ENCODE measurements at regions of chr1 and their contacts with region 1.

Region 1: DNA sequence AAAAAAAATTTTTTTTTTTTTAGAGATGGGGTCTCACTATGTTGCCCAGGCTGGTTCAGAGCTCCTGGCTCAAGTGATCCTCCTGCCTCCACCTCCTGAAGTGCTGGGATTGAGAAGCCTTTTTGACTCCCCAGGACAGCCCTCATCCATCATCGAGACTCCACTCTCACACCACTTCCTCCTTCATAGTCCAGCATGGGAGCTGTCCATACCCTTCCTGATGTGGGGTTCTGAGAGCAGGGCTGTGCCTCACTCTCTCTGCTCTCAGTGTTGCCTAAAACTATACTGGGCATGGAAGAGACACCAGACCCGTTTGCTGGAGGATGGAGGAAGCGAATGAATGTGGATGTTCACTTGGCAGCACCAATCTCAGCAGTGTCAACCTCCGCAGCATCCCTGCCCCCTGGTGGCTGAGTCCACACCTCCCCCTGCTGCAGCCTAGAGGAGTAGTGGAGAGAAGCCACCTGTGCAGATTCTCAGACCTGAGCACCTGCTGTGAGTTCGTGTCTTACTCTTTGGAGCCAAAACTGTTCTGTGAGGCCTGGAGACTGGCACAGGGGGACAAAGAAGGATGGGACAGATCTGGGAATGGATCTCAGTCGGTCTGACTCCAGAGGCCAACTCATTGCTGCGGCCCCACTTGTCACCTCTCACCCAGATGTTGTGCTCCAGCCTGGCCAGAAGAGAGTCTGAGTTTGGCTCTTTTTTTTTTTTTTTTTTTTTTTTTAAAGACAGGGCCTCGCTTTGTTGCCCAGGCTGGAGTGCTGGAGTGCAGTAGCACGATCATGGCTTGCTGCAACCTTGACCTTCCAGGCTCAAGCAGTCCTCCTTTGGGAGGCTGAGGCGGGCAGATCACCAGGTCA is 17.7 kb downstream of the TINAGL1 start:
- DNase-seq: peak; percentile 90
- ATAC-seq: peak; percentile 91
- H3K4me3 ChIP-seq: no peak overlapping the region
- H3K27ac ChIP-seq: no peak overlapping the region
- H3K4me1 ChIP-seq: peaks cover 17% of the 10 kb centered on the region
- H3K27me3 ChIP-seq: no peaks in the 10 kb centered on the region
- CTCF ChIP-seq: peak; percentile 95

Region 2: GRCh38 chr1:31264790-31265386 is 329.1 kb before region 1 on chr1:
- CTCF ChIA-PET with region 1: interaction called, 12 read pairs
- POLR2A ChIA-PET with region 1: no interaction called
- intact Hi-C with region 1: no loop called
- DNase-seq: no peak
- ATAC-seq: no peak
- H3K4me3 ChIP-seq: no peak overlapping the region
- H3K27ac ChIP-seq: no peak overlapping the region
- H3K4me1 ChIP-seq: peaks cover 13% of the 10 kb centered on the region; the same call in 1 of the 2 replicates
- H3K27me3 ChIP-seq: no peaks in the 10 kb centered on the region
- CTCF ChIP-seq: no peak

Region 3: GRCh38 chr1:31548907-31549808 is 44.8 kb before region 1 on chr1:
- CTCF ChIA-PET with region 1: interaction called, 3 read pairs
- POLR2A ChIA-PET with region 1: no interaction called
- intact Hi-C with region 1: loop called (anchors 1 kb)
- DNase-seq: peak; percentile 97
- ATAC-seq: peak; percentile 86
- H3K4me3 ChIP-seq: peak overlapping the region; percentile 55
- H3K27ac ChIP-seq: peak overlapping the region; percentile 74
- H3K4me1 ChIP-seq: peaks cover 24% of the 10 kb centered on the region
- H3K27me3 ChIP-seq: no peaks in the 10 kb centered on the region
- CTCF ChIP-seq: peak; percentile 96

Region 4: GRCh38 chr1:31564134-31564989 is 29.6 kb before region 1 on chr1:
- CTCF ChIA-PET with region 1: interaction called, 3 read pairs
- POLR2A ChIA-PET with region 1: no interaction called
- intact Hi-C with region 1: loop called (anchors 1 kb)
- DNase-seq: peak; percentile 88
- ATAC-seq: peak; percentile 60
- H3K4me3 ChIP-seq: no peak overlapping the region
- H3K27ac ChIP-seq: peak overlapping the region; percentile 79
- H3K4me1 ChIP-seq: peaks cover 33% of the 10 kb centered on the region
- H3K27me3 ChIP-seq: no peaks in the 10 kb centered on the region
- CTCF ChIP-seq: peak; percentile 93

Region 5: DNA sequence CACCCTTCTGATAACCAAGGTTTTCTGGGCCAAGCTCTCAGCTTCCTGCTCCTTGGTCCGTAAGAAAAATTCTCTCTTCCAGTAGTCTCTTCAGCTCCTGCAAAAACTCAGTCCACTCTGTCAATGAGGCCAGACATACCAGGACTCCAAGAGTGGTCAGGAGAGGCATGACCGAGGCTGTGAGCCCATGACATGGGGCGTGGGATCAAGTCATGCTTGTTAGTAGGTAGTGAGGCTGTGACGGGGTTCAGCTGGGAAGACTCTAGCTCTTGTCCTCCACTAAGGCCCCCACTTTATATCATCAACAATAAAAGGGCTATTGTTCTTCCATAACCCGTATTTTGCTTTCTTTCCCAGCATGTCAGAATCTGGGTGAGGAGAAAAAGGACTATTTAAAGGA is 13.4 kb after region 1 on chr1:
- CTCF ChIA-PET with region 1: interaction called, 10 read pairs
- POLR2A ChIA-PET with region 1: no interaction called
- intact Hi-C with region 1: no loop called
- DNase-seq: no peak
- ATAC-seq: no peak
- H3K4me3 ChIP-seq: no peak overlapping the region
- H3K27ac ChIP-seq: no peak overlapping the region
- H3K4me1 ChIP-seq: no peaks in the 10 kb centered on the region
- H3K27me3 ChIP-seq: no peaks in the 10 kb centered on the region
- CTCF ChIP-seq: no peak

Region 6: GRCh38 chr1:31705080-31705866 is 111.3 kb after region 1 on chr1:
- CTCF ChIA-PET with region 1: no interaction called
- POLR2A ChIA-PET with region 1: no interaction called
- intact Hi-C with region 1: no loop called
- DNase-seq: peak; percentile 49
- ATAC-seq: peak; percentile 10; the same call in 1 of the 2 replicates
- H3K4me3 ChIP-seq: no peak overlapping the region
- H3K27ac ChIP-seq: no peak overlapping the region
- H3K4me1 ChIP-seq: peaks cover 40% of the 10 kb centered on the region
- H3K27me3 ChIP-seq: no peaks in the 10 kb centered on the region
- CTCF ChIP-seq: peak; percentile 40; the same call in 1 of the 2 replicates